HCT116 (cell line): ENCODE measurements at regions of chr10 and their contacts with region 1.

Region 1: GRCh38 chr10:5948999-5949759 is 28.2 kb downstream of the IL15RA start:
- DNase-seq: peak; percentile 32
- ATAC-seq: peak; percentile 90
- H3K4me3 ChIP-seq: no peak overlapping the region
- H3K27ac ChIP-seq: no peak overlapping the region
- H3K4me1 ChIP-seq: peaks cover 14 to 18% of the 10 kb centered on the region in 2 experiments; a peak in 3 of 4 replicates
- H3K27me3 ChIP-seq: no peaks in the 10 kb centered on the region
- CTCF ChIP-seq: peak; percentile 69 to 91 (median 73)
- POLR2A ChIP-seq: no peak
- RAD21 ChIP-seq: peak; percentile 88

Region 2: DNA sequence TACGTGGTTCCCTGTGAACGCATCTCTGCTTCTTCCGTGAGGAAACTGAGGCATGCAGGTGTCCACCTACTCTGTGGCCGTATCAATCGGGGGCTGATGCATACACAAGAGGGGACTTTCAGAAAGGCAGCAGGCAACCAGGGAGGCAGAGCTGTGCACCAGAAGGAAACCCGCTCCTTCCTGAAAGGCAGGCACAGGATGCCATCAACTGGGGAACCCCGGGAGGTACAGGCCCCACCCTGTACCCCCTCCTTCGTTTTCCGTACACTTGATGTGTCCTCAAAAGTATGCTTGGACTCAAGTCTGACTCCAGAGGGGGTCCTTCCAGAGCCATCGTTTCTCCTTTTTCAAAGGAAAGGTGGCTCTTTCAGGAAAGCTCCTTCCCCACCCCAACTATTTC is 342.3 kb before region 1 on chr10:
- CTCF ChIA-PET with region 1: no interaction called
- POLR2A ChIA-PET with region 1: no interaction called
- RAD21 ChIA-PET with region 1: no interaction called
- intact Hi-C with region 1: no loop called
- DNase-seq: no peak
- ATAC-seq: no peak
- H3K4me3 ChIP-seq: no peak overlapping the region
- H3K27ac ChIP-seq: no peak overlapping the region
- H3K4me1 ChIP-seq: peaks cover 16 to 28% of the 10 kb centered on the region in 2 experiments
- H3K27me3 ChIP-seq: no peaks in the 10 kb centered on the region
- CTCF ChIP-seq: no peak
- POLR2A ChIP-seq: no peak
- RAD21 ChIP-seq: no peak

Region 3: DNA sequence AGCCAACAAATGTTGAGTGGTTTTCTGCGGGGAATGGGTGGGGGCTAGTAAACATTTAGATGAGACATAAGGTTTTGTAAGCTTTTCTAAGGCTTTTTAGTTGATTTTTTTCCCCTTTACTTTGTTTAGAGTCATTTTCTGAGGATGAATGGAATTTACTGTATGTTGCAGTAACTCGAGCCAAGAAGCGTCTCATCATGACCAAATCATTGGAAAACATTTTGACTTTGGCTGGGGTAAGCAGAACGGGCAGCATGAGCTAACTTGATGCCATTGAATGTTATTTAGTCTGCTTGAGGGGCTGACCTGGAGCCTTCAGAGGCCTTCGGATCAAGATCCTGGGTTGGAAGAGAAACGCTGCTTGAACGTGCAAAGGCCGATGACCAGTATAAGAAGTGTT is 21.9 kb before region 1 on chr10:
- CTCF ChIA-PET with region 1: no interaction called
- POLR2A ChIA-PET with region 1: no interaction called
- RAD21 ChIA-PET with region 1: no interaction called
- intact Hi-C with region 1: no loop called
- DNase-seq: no peak
- ATAC-seq: no peak
- H3K4me3 ChIP-seq: no peak overlapping the region
- H3K27ac ChIP-seq: no peak overlapping the region
- H3K4me1 ChIP-seq: no peaks in the 10 kb centered on the region
- H3K27me3 ChIP-seq: no peaks in the 10 kb centered on the region
- CTCF ChIP-seq: no peak
- POLR2A ChIP-seq: no peak
- RAD21 ChIP-seq: no peak

Region 4: DNA sequence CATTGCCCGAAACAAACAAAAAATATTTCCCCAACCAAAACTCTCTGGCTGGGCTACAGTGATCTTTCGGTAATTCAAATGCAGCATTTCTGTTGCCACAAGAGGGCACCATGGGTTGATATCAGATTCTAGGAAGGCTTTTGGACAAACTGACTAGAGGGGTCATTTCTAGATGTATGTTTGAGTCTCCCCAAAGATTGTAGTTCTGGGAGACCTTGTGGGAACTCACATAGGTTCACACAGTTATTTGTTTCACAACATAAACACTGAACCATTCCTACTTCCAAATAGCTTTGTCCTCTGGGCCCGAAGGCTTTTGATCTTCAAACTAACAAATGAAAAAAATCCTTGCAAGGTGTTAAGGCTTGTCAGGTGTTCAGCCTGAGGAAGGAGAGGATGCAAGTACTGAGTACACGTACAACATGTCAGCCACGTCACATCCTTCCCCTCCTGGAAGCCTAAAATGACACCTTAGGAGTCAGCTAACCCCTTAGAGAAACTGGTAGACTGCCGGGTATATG is 65.1 kb after region 1 on chr10:
- CTCF ChIA-PET with region 1: no interaction called
- POLR2A ChIA-PET with region 1: no interaction called
- RAD21 ChIA-PET with region 1: no interaction called
- intact Hi-C with region 1: loop called (anchors 10 kb)
- DNase-seq: peak; percentile 29
- ATAC-seq: peak; percentile 91
- H3K4me3 ChIP-seq: no peak overlapping the region
- H3K27ac ChIP-seq: no peak overlapping the region
- H3K4me1 ChIP-seq: 0 out of 4 replicates have a peak, but pooled peaks cover 0 to 2% of the 10 kb centered on the region in 2 experiments
- H3K27me3 ChIP-seq: no peaks in the 10 kb centered on the region
- CTCF ChIP-seq: peak; percentile 77 to 88 (median 84)
- POLR2A ChIP-seq: no peak
- RAD21 ChIP-seq: peak; percentile 67

Region 5: GRCh38 chr10:6050801-6051445 is 101.7 kb after region 1 on chr10:
- CTCF ChIA-PET with region 1: no interaction called
- POLR2A ChIA-PET with region 1: no interaction called
- RAD21 ChIA-PET with region 1: no interaction called
- intact Hi-C with region 1: no loop called
- DNase-seq: no peak
- ATAC-seq: peak; percentile 48
- H3K4me3 ChIP-seq: peak overlapping the region in 1 of 2 experiments; percentile 20; a peak in 1 of 4 replicates
- H3K27ac ChIP-seq: no peak overlapping the region
- H3K4me1 ChIP-seq: peaks cover 10 to 25% of the 10 kb centered on the region in 2 experiments; a peak in 3 of 4 replicates
- H3K27me3 ChIP-seq: peaks cover 20% of the 10 kb centered on the region
- CTCF ChIP-seq: peak in 1 of 3 experiments; percentile 19; a peak in 1 of 6 replicates
- POLR2A ChIP-seq: no peak
- RAD21 ChIP-seq: peak; percentile 36; the same call in 1 of the 2 replicates

Region 6: DNA sequence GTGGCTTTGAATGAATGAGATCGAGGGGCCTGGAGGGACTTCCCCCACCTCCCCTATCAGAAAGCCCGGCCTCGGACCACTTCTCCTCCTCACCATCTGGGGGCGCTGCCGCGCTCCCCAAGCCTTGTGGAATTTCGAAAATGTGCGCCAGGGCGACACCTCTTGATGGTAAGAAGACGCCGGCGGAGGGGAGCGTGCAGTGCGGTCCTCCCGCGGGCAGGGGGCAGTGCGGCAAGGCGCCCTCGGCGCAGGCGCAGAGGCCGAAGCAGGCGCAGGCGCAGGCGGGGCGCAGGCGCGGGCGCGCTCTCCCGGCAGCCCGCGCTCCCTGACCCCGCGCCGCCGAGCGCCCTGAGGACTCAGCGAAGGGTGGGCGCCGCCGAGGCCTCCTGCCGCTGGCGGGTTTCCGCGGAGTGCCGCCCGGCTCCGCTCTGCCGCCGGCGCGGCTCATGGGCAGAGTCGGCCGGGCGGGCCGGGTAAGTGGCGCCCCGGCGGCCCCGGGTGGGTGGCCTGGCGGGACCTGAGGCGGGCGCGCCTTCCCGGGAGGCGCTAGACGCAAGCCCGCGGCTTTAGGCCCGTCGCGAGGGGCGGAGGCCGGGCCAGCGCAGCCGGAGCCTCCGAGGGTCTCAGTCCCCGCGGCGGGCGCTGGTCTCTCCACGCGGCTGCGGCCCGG is 139.7 kb after region 1 on chr10 and contains the start of gene RBM17:
- CTCF ChIA-PET with region 1: interaction called, 4 read pairs
- POLR2A ChIA-PET with region 1: no interaction called
- RAD21 ChIA-PET with region 1: no interaction called
- intact Hi-C with region 1: loop called (anchors 2 kb)
- DNase-seq: peak; percentile 94
- ATAC-seq: peak; percentile 88
- H3K4me3 ChIP-seq: peak within 1 kb of the TSS; percentile 89 to 97
- H3K27ac ChIP-seq: peak within 1 kb of the TSS; percentile 78
- H3K4me1 ChIP-seq: peaks cover 5 to 15% of the 10 kb centered on the region in 2 experiments; a peak in 3 of 4 replicates
- H3K27me3 ChIP-seq: peaks cover 2% of the 10 kb centered on the region; the same call in 1 of the 2 replicates
- CTCF ChIP-seq: peak; percentile 100
- POLR2A ChIP-seq: peak; percentile 68
- RAD21 ChIP-seq: peak; percentile 83
- total RNA-seq, gene RBM17: 129 TPM

Region 7: GRCh38 chr10:6176691-6177231 is 227.6 kb after region 1 on chr10:
- CTCF ChIA-PET with region 1: no interaction called
- POLR2A ChIA-PET with region 1: no interaction called
- RAD21 ChIA-PET with region 1: no interaction called
- intact Hi-C with region 1: no loop called
- DNase-seq: no peak
- ATAC-seq: no peak
- H3K4me3 ChIP-seq: no peak overlapping the region
- H3K27ac ChIP-seq: no peak overlapping the region
- H3K4me1 ChIP-seq: no peaks in the 10 kb centered on the region
- H3K27me3 ChIP-seq: no peaks in the 10 kb centered on the region
- CTCF ChIP-seq: no peak
- POLR2A ChIP-seq: no peak
- RAD21 ChIP-seq: no peak